ENCODE measurements at regions of chr9 and their contacts with region 1.

Region 1: GRCh38 chr9:92764988-92765936 is 629 bp upstream of the BICD2 start:
- DNase-seq: peak; percentile 98
- H3K4me3 Mint-ChIP-seq: peak overlapping the region; percentile 86
- H3K27ac Mint-ChIP-seq: peak overlapping the region; percentile 92
- H3K4me1 Mint-ChIP-seq: peaks cover 45% of the 10 kb centered on the region
- H3K27me3 Mint-ChIP-seq: no peaks in the 10 kb centered on the region

Region 2: DNA sequence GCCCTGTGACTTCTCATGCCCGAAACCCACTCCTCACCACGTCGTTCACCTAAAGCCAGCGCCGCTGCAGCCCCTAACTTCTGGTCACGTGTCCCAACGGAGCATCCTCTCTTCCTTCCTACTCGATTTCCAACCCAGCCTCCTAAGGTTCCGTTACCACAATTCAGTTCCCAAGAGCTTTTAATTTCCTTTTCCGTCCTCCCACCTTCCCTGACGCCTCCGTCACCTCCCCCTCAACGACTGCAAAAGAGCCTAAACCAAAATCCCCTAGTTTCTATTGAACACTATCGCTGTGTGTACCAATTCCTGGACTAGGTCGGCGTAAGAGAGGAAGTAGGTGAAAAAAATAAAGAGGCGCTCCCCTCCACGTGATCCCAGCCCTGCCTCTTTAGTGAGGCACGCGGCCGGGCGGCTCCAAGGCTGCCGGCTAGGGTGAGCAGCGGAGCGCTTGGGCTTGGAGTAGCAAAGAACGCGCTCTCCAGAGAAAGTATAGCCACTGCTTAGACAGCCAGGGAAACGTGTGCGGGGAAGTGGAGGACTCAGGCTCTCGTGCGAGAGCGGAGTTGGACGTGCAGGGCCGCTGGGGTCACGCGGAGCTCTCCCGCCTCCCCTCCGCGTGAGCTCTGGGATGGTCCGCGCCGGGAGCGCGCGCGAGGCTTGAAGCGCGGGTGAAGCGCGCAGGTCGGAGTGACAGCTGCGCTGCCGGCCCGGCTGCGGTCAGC is 439.8 kb before region 1 on chr9 and contains the starts of genes CENPP and NOL8:
- intact Hi-C with region 1: loop called (anchors 1 kb)
- DNase-seq: peak; percentile 81
- H3K4me3 Mint-ChIP-seq: peak within 1 kb of the TSS; percentile 93
- H3K27ac Mint-ChIP-seq: peak within 1 kb of the TSS; percentile 96
- H3K4me1 Mint-ChIP-seq: peaks cover 32% of the 10 kb centered on the region
- H3K27me3 Mint-ChIP-seq: no peaks in the 10 kb centered on the region
- total RNA-seq, gene CENPP: 24.6 and 26.0 TPM in 2 replicates
- total RNA-seq, gene NOL8: 84.4 and 95.5 TPM in 2 replicates

Region 3: GRCh38 chr9:92342825-92343488 is 422.3 kb before region 1 on chr9:
- intact Hi-C with region 1: no loop called
- DNase-seq: no peak
- H3K4me3 Mint-ChIP-seq: no peak overlapping the region
- H3K27ac Mint-ChIP-seq: no peak overlapping the region
- H3K4me1 Mint-ChIP-seq: no peaks in the 10 kb centered on the region
- H3K27me3 Mint-ChIP-seq: no peaks in the 10 kb centered on the region

Region 4: DNA sequence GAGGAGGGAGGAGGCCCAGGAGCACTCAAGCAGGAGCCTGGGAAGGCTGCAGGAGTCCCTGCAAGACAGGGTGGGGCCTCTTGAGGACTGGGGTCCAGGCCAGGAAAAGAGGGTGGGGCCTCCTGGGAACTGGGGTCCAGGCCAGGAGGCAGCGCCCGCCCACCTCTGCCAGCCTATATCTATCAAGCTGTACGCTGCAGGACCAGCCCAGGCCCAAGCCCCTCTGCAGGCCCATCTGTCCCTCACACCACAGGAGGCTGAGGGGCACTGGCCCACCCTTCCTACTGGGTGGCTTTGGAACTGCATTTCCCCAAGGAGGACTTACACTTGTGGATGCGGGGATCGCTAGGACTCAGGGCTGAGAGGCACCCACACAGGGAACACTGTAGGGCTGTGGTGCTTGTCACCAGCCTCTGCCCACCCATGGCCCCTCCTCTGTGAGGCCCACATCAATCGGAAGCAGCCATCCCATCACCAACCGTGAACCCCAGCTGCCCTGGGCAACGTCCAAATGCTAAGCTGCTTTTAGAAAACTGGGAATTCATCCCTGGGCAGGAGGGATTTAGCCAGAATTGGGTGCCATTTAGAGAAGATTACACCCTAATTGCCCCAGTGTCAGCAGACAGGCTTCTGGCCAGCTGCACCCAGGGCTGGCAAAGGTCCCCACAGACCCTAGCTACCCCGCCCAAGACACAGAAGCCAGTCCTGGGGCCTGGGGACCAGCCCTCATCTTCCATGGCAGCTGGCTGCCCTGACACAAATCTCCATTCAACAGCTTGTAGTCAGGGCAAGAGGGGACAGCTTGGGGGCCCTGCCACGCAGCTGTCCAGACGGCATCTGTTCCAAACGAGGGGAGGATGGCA is 16.0 kb before region 1 on chr9:
- intact Hi-C with region 1: no loop called
- DNase-seq: no peak
- H3K4me3 Mint-ChIP-seq: no peak overlapping the region
- H3K27ac Mint-ChIP-seq: no peak overlapping the region
- H3K4me1 Mint-ChIP-seq: peaks cover 30% of the 10 kb centered on the region
- H3K27me3 Mint-ChIP-seq: no peaks in the 10 kb centered on the region

Region 5: GRCh38 chr9:92790542-92791527 is 25.6 kb after region 1 on chr9:
- intact Hi-C with region 1: loop called (anchors 1 kb)
- DNase-seq: peak; percentile 56
- H3K4me3 Mint-ChIP-seq: no peak overlapping the region
- H3K27ac Mint-ChIP-seq: no peak overlapping the region
- H3K4me1 Mint-ChIP-seq: peaks cover 12% of the 10 kb centered on the region
- H3K27me3 Mint-ChIP-seq: peaks cover 13% of the 10 kb centered on the region

Region 6: GRCh38 chr9:93058355-93059096 is 293.3 kb after region 1 on chr9 and contains the start of gene SUSD3:
- intact Hi-C with region 1: loop called (anchors 2 kb)
- DNase-seq: peak; percentile 70
- H3K4me3 Mint-ChIP-seq: peak within 1 kb of the TSS; percentile 91
- H3K27ac Mint-ChIP-seq: peak within 1 kb of the TSS; percentile 94
- H3K4me1 Mint-ChIP-seq: peaks cover 51% of the 10 kb centered on the region
- H3K27me3 Mint-ChIP-seq: no peaks in the 10 kb centered on the region
- total RNA-seq, gene SUSD3: 31.7 and 33.2 TPM in 2 replicates

Region 7: DNA sequence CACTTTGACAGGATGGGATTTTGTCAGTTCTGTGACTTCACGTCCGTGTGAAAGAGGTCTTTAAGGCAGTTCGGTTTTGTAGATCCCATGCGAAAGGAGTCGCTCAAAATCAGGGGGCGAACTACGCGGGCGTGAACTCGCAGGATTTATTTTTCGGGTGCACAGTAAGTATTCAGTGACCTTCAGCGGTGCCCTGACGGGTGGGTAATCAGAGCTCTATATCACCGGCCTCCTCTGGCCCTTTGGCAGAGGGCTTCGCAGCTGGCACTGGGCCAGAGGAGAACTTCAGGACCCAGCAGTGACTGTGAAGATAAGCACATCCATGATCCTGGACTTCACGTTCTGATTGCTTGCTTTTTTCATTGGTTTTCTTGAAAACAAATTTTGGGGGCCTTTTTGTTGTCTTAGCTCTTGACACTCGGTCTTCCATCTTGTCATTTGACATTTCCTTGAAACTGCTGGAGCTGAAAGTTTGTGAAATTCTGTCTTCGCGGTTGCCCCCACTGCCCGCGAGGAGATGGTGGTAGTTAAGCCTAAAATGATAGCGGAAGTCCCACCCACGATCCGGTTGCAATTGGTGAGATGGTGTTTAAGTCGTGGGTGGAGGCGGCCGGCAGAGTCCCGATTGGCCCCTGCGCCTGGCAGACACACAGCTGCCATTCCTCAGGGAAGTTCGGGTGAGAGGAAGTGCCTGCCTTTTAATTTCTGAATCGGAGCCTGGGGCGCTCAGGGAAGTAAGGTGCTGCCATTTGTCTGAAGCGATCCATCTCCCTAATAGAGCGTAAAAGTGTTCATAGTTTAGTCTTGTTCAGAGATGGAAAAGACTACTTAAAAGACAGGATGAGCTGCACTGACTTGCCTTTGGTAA is 688.0 kb after region 1 on chr9 and contains the start of gene FAM120AOS:
- intact Hi-C with region 1: loop called (anchors 2 kb)
- DNase-seq: peak; percentile 81
- H3K4me3 Mint-ChIP-seq: peak within 1 kb of the TSS; percentile 98
- H3K27ac Mint-ChIP-seq: peak within 1 kb of the TSS; percentile 95
- H3K4me1 Mint-ChIP-seq: peaks cover 51% of the 10 kb centered on the region
- H3K27me3 Mint-ChIP-seq: no peaks in the 10 kb centered on the region
- total RNA-seq, gene FAM120AOS: 31.2 and 38.8 TPM in 2 replicates